Calu3 (cell line): ENCODE measurements at regions of chr3 and their contacts with region 1.

Region 1: GRCh38 chr3:150878996-150879575 is 26.2 kb downstream of the MINDY4B start:
- DNase-seq: no peak
- H3K4me3 Mint-ChIP-seq: no peak overlapping the region
- H3K27ac Mint-ChIP-seq: no peak overlapping the region
- H3K4me1 Mint-ChIP-seq: no peaks in the 10 kb centered on the region
- H3K27me3 Mint-ChIP-seq: peaks cover 77% of the 10 kb centered on the region
- CTCF ChIP-seq: no peak

Region 2: DNA sequence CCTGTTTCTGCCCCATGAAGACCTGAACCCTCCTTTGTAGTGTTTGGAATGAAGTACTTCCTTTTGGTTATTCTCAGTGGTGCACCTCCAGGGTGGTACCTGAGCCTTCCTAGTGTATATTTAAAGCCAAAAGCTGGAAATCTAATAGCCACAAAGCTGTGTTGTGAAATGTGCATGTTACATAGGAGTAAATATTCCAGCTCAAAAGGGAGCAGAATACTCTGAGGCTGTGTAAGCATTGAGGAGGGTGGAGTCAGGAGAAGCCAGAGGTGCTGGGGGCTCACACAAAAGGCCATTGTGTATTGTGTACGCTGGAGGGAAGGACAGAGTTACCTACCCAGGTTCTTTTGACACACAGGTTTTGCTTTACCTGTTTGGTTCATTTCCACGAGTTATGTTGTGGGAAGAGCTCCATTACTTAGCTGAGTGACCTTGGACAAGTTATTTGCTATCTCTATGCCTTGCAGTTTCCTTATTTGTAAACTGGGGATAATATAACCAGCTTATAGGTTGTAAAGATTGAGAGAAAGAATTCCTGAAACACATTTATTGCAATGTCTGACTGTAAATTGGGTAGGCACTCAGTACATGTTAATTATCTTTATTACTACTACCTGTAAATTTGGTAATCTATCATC is 299.2 kb after region 1 on chr3:
- CTCF ChIA-PET with region 1: interaction called, 10 read pairs
- intact Hi-C with region 1: no loop called
- DNase-seq: peak; percentile 72
- H3K4me3 Mint-ChIP-seq: no peak overlapping the region
- H3K27ac Mint-ChIP-seq: no peak overlapping the region
- H3K4me1 Mint-ChIP-seq: peaks cover 8% of the 10 kb centered on the region
- H3K27me3 Mint-ChIP-seq: no peaks in the 10 kb centered on the region
- CTCF ChIP-seq: no peak